ENCODE measurements at regions of chr11 and their contacts with region 1.

Region 1: GRCh38 chr11:45339729-45340519 is 53.8 kb upstream of the SYT13 start:
- DNase-seq: peak; percentile 64
- H3K4me3 ChIP-seq: peak overlapping the region in 3 of 4 donors; percentile 11 to 49 (median 15)
- H3K27ac ChIP-seq: peak overlapping the region in 2 of 4 donors; percentile 17 to 19
- H3K4me1 ChIP-seq: peaks cover 0 to 13% (median 8%) of the 10 kb centered on the region in 3 donors
- H3K27me3 ChIP-seq: peaks cover 0 to 17% (median 0%) of the 10 kb centered on the region in 4 donors
- CTCF ChIP-seq: peak; percentile 87 to 93 (median 90)
- POLR2A ChIP-seq: no peak

Region 2: DNA sequence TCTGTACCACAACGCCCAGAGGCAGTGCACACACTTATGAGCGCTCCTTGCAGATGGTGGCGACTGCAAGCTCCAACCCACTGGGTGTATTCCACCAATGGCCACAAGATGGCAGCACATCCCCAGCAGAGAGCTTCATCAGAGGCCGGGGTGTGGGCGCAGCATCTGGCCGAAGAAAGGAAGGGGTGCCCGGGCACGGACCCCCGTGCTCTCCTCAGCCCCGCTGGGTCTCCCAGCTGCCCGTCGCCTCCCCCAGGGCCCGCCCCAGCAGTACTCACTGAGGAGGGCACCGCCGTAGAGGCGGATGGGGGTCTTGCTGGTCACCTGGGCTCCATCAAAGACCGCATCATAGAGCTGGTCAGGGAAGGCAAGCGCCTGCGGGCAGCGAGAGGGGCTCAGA is 403.4 kb before region 1 on chr11:
- intact Hi-C with region 1: loop called (anchors 10 kb)
- DNase-seq: peak; percentile 25
- H3K4me3 ChIP-seq: no peak overlapping the region
- H3K27ac ChIP-seq: no peak overlapping the region
- H3K4me1 ChIP-seq: peaks cover 0 to 37% (median 0%) of the 10 kb centered on the region in 3 donors
- H3K27me3 ChIP-seq: no peaks in the 10 kb centered on the region
- CTCF ChIP-seq: peak; percentile 95 to 99 (median 97)
- POLR2A ChIP-seq: no peak

Region 3: DNA sequence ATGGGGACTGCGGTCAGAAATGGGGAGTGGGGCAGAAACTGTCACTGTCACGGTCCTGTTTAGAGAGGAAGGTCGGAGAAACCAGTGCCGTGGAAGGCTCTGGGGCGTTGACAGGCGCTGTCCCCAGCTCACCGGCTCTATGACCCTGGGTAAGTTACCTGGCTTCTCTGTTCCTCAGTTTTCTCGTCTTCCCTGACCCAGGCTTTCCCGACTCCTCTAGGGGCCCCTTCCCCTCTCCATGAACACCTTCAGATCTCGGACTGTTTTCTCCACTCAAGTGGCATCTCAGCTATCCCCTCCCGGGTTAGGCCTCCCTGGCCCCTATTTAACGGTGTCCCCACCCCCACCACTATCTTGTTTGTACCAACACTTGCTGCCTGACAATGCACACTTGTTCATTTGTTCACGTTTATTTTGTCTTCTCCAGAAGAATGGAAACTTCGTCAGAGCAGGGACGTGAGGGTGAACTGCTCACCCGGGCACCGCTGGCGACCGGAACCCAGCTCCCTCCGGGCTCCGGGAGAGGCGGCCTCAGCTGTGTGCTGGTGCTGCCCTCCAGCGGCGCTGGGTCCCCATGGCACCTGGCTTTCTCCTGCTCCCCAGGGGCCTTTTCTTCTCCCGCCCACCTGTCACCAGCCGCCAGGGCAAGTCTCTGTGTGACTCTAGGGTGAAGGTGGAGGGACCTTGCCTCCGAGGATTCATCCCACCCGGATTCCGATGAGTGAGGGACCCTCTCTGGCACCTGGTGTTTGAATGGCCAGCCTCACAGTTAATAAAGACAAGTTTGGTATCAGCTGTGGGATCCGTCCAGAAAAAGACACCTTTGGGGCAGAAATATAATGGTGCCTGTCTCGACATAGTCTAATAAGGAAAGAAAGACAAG is 431.9 kb after region 1 on chr11:
- intact Hi-C with region 1: loop called (anchors 10 kb)
- DNase-seq: no peak
- H3K4me3 ChIP-seq: peak overlapping the region; percentile 33 to 72 (median 56)
- H3K27ac ChIP-seq: peak overlapping the region; percentile 21 to 73 (median 68)
- H3K4me1 ChIP-seq: peaks cover 3 to 10% (median 5%) of the 10 kb centered on the region in 3 donors
- H3K27me3 ChIP-seq: peaks cover 0 to 15% (median 0%) of the 10 kb centered on the region in 4 donors
- CTCF ChIP-seq: peak; percentile 87 to 94 (median 91)
- POLR2A ChIP-seq: no peak